MCF 10A (cell line): ENCODE measurements at regions of chr7 and their contacts with region 1.

Region 1: GRCh38 chr7:84248267-84248666 is 53.7 kb upstream of the SEMA3A start:
- DNase-seq: no peak
- H3K4me3 Mint-ChIP-seq: no peak overlapping the region
- H3K27ac Mint-ChIP-seq: no peak overlapping the region
- H3K4me1 Mint-ChIP-seq: no peaks in the 10 kb centered on the region
- H3K27me3 Mint-ChIP-seq: no peaks in the 10 kb centered on the region
- CTCF ChIP-seq: no peak

Region 2: GRCh38 chr7:84013710-84014171 is 234.5 kb before region 1 on chr7:
- CTCF ChIA-PET with region 1: no interaction called
- POLR2A ChIA-PET with region 1: no interaction called
- intact Hi-C with region 1: no loop called
- DNase-seq: peak; percentile 29
- H3K4me3 Mint-ChIP-seq: no peak overlapping the region
- H3K27ac Mint-ChIP-seq: no peak overlapping the region
- H3K4me1 Mint-ChIP-seq: peaks cover 6% of the 10 kb centered on the region
- H3K27me3 Mint-ChIP-seq: no peaks in the 10 kb centered on the region
- CTCF ChIP-seq: no peak

Region 3: GRCh38 chr7:84455788-84456187 is 207.5 kb after region 1 on chr7:
- CTCF ChIA-PET with region 1: interaction called, 3 read pairs
- POLR2A ChIA-PET with region 1: no interaction called
- intact Hi-C with region 1: loop called (anchors 2 kb)
- DNase-seq: peak; percentile 20
- H3K4me3 Mint-ChIP-seq: no peak overlapping the region
- H3K27ac Mint-ChIP-seq: no peak overlapping the region
- H3K4me1 Mint-ChIP-seq: no peaks in the 10 kb centered on the region
- H3K27me3 Mint-ChIP-seq: no peaks in the 10 kb centered on the region
- CTCF ChIP-seq: no peak

Region 4: DNA sequence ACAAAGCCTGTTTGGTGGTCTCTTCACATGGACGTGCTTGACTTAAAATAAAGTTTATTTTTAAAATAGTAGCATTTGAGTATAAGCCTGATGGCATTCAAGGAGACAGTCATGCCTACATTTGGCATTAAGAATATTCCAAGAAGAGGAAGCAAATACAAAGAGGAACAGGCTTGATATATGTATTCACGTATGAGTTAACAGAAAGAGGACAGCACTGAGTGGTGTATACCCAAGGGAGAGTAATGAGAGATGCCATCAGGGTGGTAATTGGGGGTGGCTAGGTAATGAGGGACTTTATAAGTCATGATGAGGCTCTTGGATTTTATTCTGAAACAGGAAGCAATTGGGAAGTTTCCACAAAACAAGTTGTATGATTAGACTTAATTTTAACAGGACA is 575.3 kb after region 1 on chr7:
- CTCF ChIA-PET with region 1: no interaction called
- POLR2A ChIA-PET with region 1: no interaction called
- intact Hi-C with region 1: no loop called
- DNase-seq: no peak
- H3K4me3 Mint-ChIP-seq: no peak overlapping the region
- H3K27ac Mint-ChIP-seq: no peak overlapping the region
- H3K4me1 Mint-ChIP-seq: no peaks in the 10 kb centered on the region
- H3K27me3 Mint-ChIP-seq: no peaks in the 10 kb centered on the region
- CTCF ChIP-seq: no peak